GM10248 (cell line): ENCODE measurements at regions of chr6 and their contacts with region 1.

Region 1: DNA sequence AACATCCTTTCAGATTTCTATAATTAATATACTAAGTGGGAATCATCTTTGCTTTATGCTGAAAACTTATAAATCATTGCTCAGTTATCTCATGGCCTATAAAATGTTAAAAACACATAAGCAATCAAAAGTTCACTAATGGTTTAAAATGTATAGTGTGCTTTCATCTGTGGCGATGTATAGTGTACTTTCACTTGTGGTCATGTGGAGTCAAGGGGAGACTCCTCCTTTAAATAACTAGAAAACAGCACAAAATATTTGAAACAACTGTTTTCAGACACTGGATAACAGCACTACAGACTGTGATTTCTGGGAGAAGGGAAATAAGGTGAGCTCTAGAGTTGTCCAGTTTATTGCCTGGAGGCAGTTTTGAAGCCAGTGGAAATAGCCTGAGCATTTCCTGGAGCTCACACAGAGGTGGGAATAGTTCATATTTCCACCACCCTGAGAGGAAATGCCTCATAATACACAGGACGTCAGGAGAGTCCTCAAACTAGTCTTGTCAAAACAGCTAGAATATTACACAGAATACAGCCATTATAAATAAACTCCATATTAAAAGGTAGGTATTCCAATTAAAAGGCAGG is 89.4 kb downstream of the CEP162 start:
- DNase-seq: no peak
- CTCF ChIP-seq: no peak

Region 2: GRCh38 chr6:84150705-84151104 is 12.6 kb after region 1 on chr6:
- CTCF ChIA-PET with region 1: interaction called, 10 read pairs
- POLR2A ChIA-PET with region 1: no interaction called
- DNase-seq: no peak
- CTCF ChIP-seq: no peak

Region 3: DNA sequence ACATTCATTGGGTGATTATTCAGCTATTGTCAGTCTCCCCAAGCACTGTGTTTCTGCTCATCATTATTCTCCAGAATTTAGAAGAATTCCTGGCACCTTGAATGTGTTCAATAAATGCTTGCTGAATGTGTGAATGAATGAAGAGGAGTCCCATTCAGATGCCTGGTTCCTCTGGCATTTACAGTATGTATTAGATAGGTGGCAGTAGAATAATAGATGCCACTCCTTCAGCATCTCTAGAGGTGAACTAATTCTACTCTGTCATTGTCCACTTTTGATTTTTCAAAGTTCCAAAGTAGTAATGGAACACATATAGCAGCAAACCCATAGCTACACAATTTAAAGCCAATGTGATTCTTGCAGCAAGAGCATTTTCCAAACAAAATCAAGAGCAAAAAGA is 208.3 kb after region 1 on chr6:
- CTCF ChIA-PET with region 1: no interaction called
- POLR2A ChIA-PET with region 1: no interaction called
- DNase-seq: no peak
- CTCF ChIP-seq: no peak